Sciatic nerve (tissue), 2 donors: ENCODE measurements at regions of chr3 and their contacts with region 1.

Region 1: GRCh38 chr3:109297496-109297895 is 18.8 kb downstream of the DPPA2 start:
- DNase-seq: no peak
- ATAC-seq: no peak

Region 2: DNA sequence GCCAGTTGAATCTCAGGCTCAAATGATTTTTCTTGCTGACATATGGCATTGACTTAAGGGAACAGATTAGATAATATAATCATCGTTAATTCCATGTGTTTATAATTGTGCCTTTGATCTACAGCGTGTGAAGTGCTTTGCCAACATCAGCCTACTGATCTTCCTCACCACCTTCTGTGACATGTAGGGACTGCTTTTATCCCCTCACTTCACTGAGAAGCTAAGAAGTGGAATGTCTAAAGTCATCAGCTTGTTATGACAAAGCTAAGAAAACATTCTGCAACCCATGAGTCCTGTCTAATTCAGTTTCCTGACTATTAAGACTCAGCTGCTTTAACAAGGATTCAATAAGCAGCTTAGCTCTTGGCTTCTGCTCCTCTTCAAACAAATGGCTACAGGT is 893.1 kb before region 1 on chr3:
- intact Hi-C with region 1: no loop called
- DNase-seq: no peak
- ATAC-seq: no peak

Region 3: GRCh38 chr3:110391640-110392395 is 1094.3 kb after region 1 on chr3:
- intact Hi-C with region 1: loop called (anchors 5 kb)
- DNase-seq: no peak
- ATAC-seq: no peak